Calu3 (cell line): ENCODE measurements at regions of chr2 and their contacts with region 1.

Region 1: DNA sequence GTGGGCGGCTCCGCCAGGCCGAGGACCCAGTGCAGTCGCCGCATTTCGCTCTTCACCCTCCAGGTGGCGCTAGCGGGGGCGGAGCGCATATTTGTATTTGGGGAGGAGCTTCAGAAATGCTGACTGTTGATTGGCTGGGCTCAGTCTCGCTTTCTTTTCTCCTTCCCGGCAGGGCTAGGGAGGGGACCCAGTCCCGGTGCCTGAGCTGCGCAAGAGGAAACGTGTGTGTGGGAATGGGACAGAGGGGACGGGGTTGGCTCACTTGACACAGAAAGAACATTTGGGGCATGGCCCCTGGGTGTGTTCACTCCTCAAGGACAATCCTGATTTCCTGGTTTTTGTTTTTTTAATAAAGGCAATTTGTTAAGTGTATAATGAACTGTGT is 20.3 kb upstream of the DNMT3A start:
- DNase-seq: peak; percentile 95
- H3K4me3 Mint-ChIP-seq: peak overlapping the region; percentile 59
- H3K27ac Mint-ChIP-seq: peak overlapping the region; percentile 7
- H3K4me1 Mint-ChIP-seq: peaks cover 25% of the 10 kb centered on the region
- H3K27me3 Mint-ChIP-seq: no peaks in the 10 kb centered on the region
- CTCF ChIP-seq: peak; percentile 91

Region 2: GRCh38 chr2:25386971-25387875 is 25.2 kb after region 1 on chr2:
- CTCF ChIA-PET with region 1: interaction called, 12 read pairs
- intact Hi-C with region 1: no loop called
- DNase-seq: no peak
- H3K4me3 Mint-ChIP-seq: no peak overlapping the region
- H3K27ac Mint-ChIP-seq: no peak overlapping the region
- H3K4me1 Mint-ChIP-seq: no peaks in the 10 kb centered on the region
- H3K27me3 Mint-ChIP-seq: no peaks in the 10 kb centered on the region
- CTCF ChIP-seq: no peak

Region 3: DNA sequence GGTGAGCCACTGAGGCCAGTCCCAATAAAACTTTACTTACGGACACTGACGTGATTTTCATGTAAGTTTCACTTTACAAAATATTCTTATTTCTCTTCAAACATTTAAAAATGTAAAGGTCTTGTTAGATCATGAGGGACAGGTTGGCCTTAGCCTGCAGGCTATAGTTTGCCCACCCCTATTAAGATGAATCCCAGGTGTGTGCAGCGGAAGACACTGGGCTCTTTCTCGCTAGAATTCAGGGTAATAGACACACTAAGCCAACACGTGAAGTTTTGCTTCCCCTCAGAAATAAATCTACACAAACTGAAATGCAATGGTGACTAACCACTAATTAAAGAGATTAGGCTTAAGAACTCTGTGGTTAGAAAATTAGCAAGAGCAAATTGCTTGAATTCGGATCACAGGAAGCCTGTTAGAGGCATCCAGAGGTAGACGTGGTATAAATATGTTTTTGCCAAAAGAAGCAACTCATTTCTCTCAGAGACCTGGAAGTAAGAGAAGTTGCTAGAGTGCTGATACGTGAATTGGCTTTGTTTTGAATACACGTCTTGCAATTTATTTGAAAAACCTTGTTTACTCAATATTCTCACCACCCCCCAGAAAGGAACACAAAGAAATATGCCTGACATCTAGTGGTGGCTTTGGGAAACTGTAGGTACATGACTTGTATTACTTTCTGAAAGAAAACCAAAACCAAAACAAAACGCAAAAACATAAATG is 159.8 kb after region 1 on chr2:
- CTCF ChIA-PET with region 1: no interaction called
- intact Hi-C with region 1: loop called (anchors 5 kb)
- DNase-seq: peak; percentile 26
- H3K4me3 Mint-ChIP-seq: peak overlapping the region; percentile 61
- H3K27ac Mint-ChIP-seq: peak overlapping the region; percentile 63
- H3K4me1 Mint-ChIP-seq: peaks cover 7% of the 10 kb centered on the region
- H3K27me3 Mint-ChIP-seq: no peaks in the 10 kb centered on the region
- CTCF ChIP-seq: peak; percentile 35